ENCODE measurements at regions of chr16 and their contacts with region 1.

Region 1: GRCh38 chr16:68310761-68311511 is at the starts of genes PRMT7 and SLC7A6OS:
- DNase-seq: peak; percentile 96
- H3K4me3 Mint-ChIP-seq: peak within 1 kb of the TSS; percentile 94
- H3K27ac Mint-ChIP-seq: peak within 1 kb of the TSS; percentile 89
- H3K4me1 Mint-ChIP-seq: peaks cover 46% of the 10 kb centered on the region
- H3K27me3 Mint-ChIP-seq: no peaks in the 10 kb centered on the region
- total RNA-seq, gene PRMT7: 51.6 to 52.4 TPM
- total RNA-seq, gene SLC7A6OS: 23.0 to 26.4 TPM

Region 2: DNA sequence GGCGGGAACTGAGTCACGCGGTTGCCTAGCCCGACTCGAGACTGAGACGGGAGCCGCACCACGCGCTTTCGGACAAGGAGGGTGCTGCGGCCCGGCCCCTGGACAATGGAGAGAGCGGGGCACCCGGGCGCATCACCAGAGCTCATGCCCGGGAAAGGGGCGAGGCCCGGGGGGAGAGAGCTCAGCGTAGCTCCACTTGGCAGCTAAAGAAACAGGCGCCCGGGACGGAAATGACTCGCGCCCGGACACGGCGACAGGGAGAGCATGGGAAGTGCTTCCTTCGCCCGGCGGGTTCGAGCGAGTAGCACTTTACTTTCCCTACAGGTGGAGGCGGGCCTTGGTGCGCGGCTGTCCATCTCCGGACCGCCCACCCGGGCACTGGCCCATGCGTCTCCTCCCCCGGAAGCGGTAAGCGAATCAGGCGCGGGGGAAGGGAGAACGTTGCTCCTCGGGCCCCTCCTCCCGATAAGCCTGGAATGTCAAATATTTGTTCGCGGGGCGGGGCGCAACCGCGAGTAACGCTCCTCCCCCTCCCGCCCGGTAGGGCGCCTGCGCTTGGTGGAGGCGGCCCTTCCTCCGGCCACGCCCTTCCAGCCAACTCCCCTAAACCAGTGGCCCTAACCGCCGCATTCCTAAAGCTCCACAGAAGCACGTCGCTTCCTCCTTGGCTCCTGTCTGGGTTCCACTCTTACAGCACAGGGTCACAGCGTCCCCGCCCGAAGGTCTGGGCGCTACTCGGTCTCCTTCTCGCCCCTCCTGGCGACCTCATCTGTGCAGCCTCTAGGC is 73.5 kb before region 1 on chr16:
- CTCF ChIA-PET with region 1: no interaction called
- intact Hi-C with region 1: loop called (anchors 1 kb)
- DNase-seq: peak; percentile 95
- H3K4me3 Mint-ChIP-seq: peak overlapping the region; percentile 93
- H3K27ac Mint-ChIP-seq: peak overlapping the region; percentile 79
- H3K4me1 Mint-ChIP-seq: peaks cover 30% of the 10 kb centered on the region
- H3K27me3 Mint-ChIP-seq: no peaks in the 10 kb centered on the region

Region 3: GRCh38 chr16:68244903-68245853 is 65.8 kb before region 1 on chr16 and contains the start of gene PLA2G15:
- CTCF ChIA-PET with region 1: no interaction called
- intact Hi-C with region 1: loop called (anchors 1 kb)
- DNase-seq: peak; percentile 97
- H3K4me3 Mint-ChIP-seq: peak within 1 kb of the TSS; percentile 90
- H3K27ac Mint-ChIP-seq: no peak within 1 kb of the TSS
- H3K4me1 Mint-ChIP-seq: peaks cover 20% of the 10 kb centered on the region
- H3K27me3 Mint-ChIP-seq: no peaks in the 10 kb centered on the region
- total RNA-seq, gene PLA2G15: 4.2 to 5.4 TPM

Region 4: DNA sequence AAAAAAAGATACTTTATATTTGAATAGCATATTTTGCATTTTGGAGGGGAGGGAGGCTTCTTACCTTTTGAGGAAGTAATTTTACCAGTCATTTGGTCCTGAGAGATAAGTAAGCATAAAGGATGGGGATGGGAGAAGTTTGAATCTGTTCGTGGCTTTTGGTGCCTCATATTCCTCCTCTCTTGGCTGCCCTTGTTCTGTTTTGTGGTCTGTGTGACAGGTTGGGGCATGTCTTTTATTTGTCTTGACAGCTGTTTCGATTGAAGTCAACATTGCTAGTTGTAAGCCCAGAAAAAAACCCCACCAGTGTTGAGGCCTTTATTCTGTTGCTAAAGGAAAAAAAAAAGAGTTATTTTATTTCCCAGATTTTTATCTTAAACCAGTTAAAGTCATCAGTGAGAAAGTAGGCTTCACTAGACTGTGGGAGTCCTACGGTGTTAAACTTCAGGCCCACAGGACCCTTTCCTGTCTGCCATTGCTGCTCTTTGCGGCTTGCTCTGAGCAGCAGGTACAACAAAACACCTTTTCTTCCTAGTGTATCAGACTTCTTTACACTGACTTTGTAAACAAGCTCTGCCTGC is 35.2 kb before region 1 on chr16:
- CTCF ChIA-PET with region 1: interaction called, 4 read pairs
- intact Hi-C with region 1: loop called (anchors 1 kb)
- DNase-seq: peak; percentile 78
- H3K4me3 Mint-ChIP-seq: peak overlapping the region; percentile 52
- H3K27ac Mint-ChIP-seq: peak overlapping the region; percentile 99
- H3K4me1 Mint-ChIP-seq: peaks cover 74% of the 10 kb centered on the region
- H3K27me3 Mint-ChIP-seq: no peaks in the 10 kb centered on the region

Region 5: GRCh38 chr16:68289621-68290329 is 21.2 kb before region 1 on chr16:
- CTCF ChIA-PET with region 1: interaction called, 3 read pairs
- intact Hi-C with region 1: loop called (anchors 1 kb)
- DNase-seq: peak; percentile 81
- H3K4me3 Mint-ChIP-seq: no peak overlapping the region
- H3K27ac Mint-ChIP-seq: peak overlapping the region; percentile 92
- H3K4me1 Mint-ChIP-seq: peaks cover 87% of the 10 kb centered on the region
- H3K27me3 Mint-ChIP-seq: no peaks in the 10 kb centered on the region

Region 6: GRCh38 chr16:68328151-68328859 is 17.4 kb after region 1 on chr16:
- CTCF ChIA-PET with region 1: interaction called, 12 read pairs
- intact Hi-C with region 1: loop called (anchors 1 kb)
- DNase-seq: peak; percentile 89
- H3K4me3 Mint-ChIP-seq: no peak overlapping the region
- H3K27ac Mint-ChIP-seq: no peak overlapping the region
- H3K4me1 Mint-ChIP-seq: peaks cover 25% of the 10 kb centered on the region
- H3K27me3 Mint-ChIP-seq: no peaks in the 10 kb centered on the region

Region 7: GRCh38 chr16:69204172-69204571 is 893.2 kb after region 1 on chr16:
- CTCF ChIA-PET with region 1: no interaction called
- intact Hi-C with region 1: no loop called
- DNase-seq: no peak
- H3K4me3 Mint-ChIP-seq: no peak overlapping the region
- H3K27ac Mint-ChIP-seq: no peak overlapping the region
- H3K4me1 Mint-ChIP-seq: peaks cover 16% of the 10 kb centered on the region
- H3K27me3 Mint-ChIP-seq: no peaks in the 10 kb centered on the region

Measured in activated naive CD4-positive, alpha-beta T cell treated with anti-CD3 and anti-CD28 coated beads for 36 hours (primary cell).